ENCODE measurements at regions of chr3 and their contacts with region 1.

Region 1: GRCh38 chr3:53919741-53920140 is 28.1 kb upstream of the SELENOK start:
- DNase-seq: no peak
- ATAC-seq: no peak
- H3K4me3 ChIP-seq: no peak overlapping the region
- H3K4me3 Mint-ChIP-seq: no peak overlapping the region
- H3K27ac ChIP-seq: no peak overlapping the region
- H3K27ac Mint-ChIP-seq: no peak overlapping the region
- H3K4me1 ChIP-seq: no peaks in the 10 kb centered on the region
- H3K4me1 Mint-ChIP-seq: no peaks in the 10 kb centered on the region
- H3K27me3 ChIP-seq: peaks cover 3 to 8% of the 10 kb centered on the region in 2 experiments
- H3K27me3 Mint-ChIP-seq: peaks cover 25 to 28% of the 10 kb centered on the region in 2 donors

Region 2: GRCh38 chr3:53320697-53321096 is 599.0 kb before region 1 on chr3:
- CTCF ChIA-PET with region 1: no interaction called
- POLR2A ChIA-PET with region 1: interaction called in 1 of 2 experiments, 16 read pairs
- DNase-seq: no peak
- ATAC-seq: no peak
- H3K4me3 ChIP-seq: no peak overlapping the region
- H3K4me3 Mint-ChIP-seq: no peak overlapping the region
- H3K27ac ChIP-seq: no peak overlapping the region
- H3K27ac Mint-ChIP-seq: no peak overlapping the region
- H3K4me1 ChIP-seq: no peaks in the 10 kb centered on the region
- H3K4me1 Mint-ChIP-seq: peaks cover 19 to 29% (median 28%) of the 10 kb centered on the region in 3 donors
- H3K27me3 ChIP-seq: no peaks in the 10 kb centered on the region
- H3K27me3 Mint-ChIP-seq: no peaks in the 10 kb centered on the region

Region 3: GRCh38 chr3:55313666-55314065 is 1393.9 kb after region 1 on chr3:
- CTCF ChIA-PET with region 1: no interaction called
- POLR2A ChIA-PET with region 1: no interaction called
- DNase-seq: no peak
- ATAC-seq: no peak
- H3K4me3 ChIP-seq: no peak overlapping the region
- H3K4me3 Mint-ChIP-seq: no peak overlapping the region
- H3K27ac ChIP-seq: no peak overlapping the region
- H3K27ac Mint-ChIP-seq: no peak overlapping the region
- H3K4me1 ChIP-seq: no peaks in the 10 kb centered on the region
- H3K4me1 Mint-ChIP-seq: no peaks in the 10 kb centered on the region
- H3K27me3 ChIP-seq: no peaks in the 10 kb centered on the region
- H3K27me3 Mint-ChIP-seq: no peaks in the 10 kb centered on the region